ENCODE measurements at regions of chr16 and their contacts with region 1.

Region 1: GRCh38 chr16:9447195-9447551 is 355.7 kb downstream of the HAPSTR1 start:
- DNase-seq: peak; percentile 70 to 86 (median 78)
- ATAC-seq: peak; percentile 91 to 95 (median 93)
- H3K4me3 ChIP-seq: no peak overlapping the region
- H3K27ac ChIP-seq: peak overlapping the region; percentile 41 to 83 (median 65)
- H3K4me1 ChIP-seq: peaks cover 0 to 10% (median 0%) of the 10 kb centered on the region in 12 donors
- H3K27me3 ChIP-seq: no peaks in the 10 kb centered on the region
- CTCF ChIP-seq: no peak
- POLR2A ChIP-seq: no peak

Region 2: GRCh38 chr16:9365376-9365728 is 81.8 kb before region 1 on chr16:
- intact Hi-C with region 1: loop called in 4 of 10 experiments (anchors 1 to 5 kb)
- DNase-seq: peak in 4 of 5 donors; percentile 71 to 89 (median 81)
- ATAC-seq: peak; percentile 90 to 94 (median 93)
- H3K4me3 ChIP-seq: no peak overlapping the region
- H3K27ac ChIP-seq: peak overlapping the region in 10 of 12 donors; percentile 51 to 82 (median 66)
- H3K4me1 ChIP-seq: peaks cover 0 to 26% (median 5%) of the 10 kb centered on the region in 12 donors
- H3K27me3 ChIP-seq: no peaks in the 10 kb centered on the region
- CTCF ChIP-seq: no peak
- POLR2A ChIP-seq: no peak

Region 3: GRCh38 chr16:9415548-9415947 is 31.6 kb before region 1 on chr16:
- intact Hi-C with region 1: no loop called
- DNase-seq: no peak
- ATAC-seq: no peak
- H3K4me3 ChIP-seq: no peak overlapping the region
- H3K27ac ChIP-seq: no peak overlapping the region
- H3K4me1 ChIP-seq: no peaks in the 10 kb centered on the region
- H3K27me3 ChIP-seq: no peaks in the 10 kb centered on the region
- CTCF ChIP-seq: no peak
- POLR2A ChIP-seq: no peak

Region 4: GRCh38 chr16:9489835-9490467 is 42.8 kb after region 1 on chr16:
- intact Hi-C with region 1: loop called in 2 of 10 experiments (anchors 5 kb)
- DNase-seq: peak; percentile 13 to 88 (median 63)
- ATAC-seq: peak; percentile 92 to 97 (median 94)
- H3K4me3 ChIP-seq: no peak overlapping the region
- H3K27ac ChIP-seq: peak overlapping the region in 8 of 12 donors; percentile 12 to 75 (median 45)
- H3K4me1 ChIP-seq: peaks cover 0 to 6% (median 0%) of the 10 kb centered on the region in 12 donors
- H3K27me3 ChIP-seq: peaks cover 0 to 6% (median 0%) of the 10 kb centered on the region in 9 donors
- CTCF ChIP-seq: no peak
- POLR2A ChIP-seq: no peak

Region 5: DNA sequence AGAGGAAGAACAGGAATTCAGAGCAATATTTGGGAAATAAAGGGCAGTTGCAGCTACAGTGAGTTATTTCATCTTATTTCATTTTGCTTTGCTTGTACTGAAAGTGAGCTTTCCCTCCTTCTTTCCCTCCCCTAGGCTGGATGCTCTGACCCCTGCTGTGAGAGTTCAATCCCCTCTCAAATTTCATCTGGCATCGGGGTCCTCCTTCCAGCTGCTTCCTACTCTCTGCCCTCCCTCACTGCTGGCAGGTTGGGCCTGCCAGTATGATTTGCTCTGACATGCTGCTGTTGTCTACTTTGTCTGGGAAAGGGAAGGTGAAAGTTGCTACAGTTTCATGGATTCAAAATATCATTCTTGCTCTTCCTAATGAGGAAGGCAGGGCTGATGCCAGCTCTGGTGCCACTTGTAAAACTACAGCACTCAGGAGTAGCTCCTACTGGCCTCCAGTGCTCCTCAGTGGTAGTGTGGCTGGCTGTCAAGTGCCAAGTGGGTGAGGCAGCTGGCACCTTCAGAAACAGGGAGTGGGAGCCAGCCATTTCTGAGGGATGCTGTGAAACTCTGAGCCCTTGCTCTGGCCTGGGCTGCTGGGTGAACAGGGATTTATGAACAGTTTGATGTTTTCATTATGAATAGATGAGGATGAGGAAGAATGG is 52.9 kb after region 1 on chr16:
- intact Hi-C with region 1: loop called in 1 of 10 experiments (anchors 5 kb)
- DNase-seq: peak in 2 of 5 donors; percentile 30 to 36
- ATAC-seq: no peak
- H3K4me3 ChIP-seq: no peak overlapping the region
- H3K27ac ChIP-seq: no peak overlapping the region
- H3K4me1 ChIP-seq: peaks cover 0 to 4% (median 0%) of the 10 kb centered on the region in 12 donors
- H3K27me3 ChIP-seq: peaks cover 0 to 4% (median 0%) of the 10 kb centered on the region in 9 donors
- CTCF ChIP-seq: peak in 1 of 12 donors; percentile 14
- POLR2A ChIP-seq: no peak

Region 6: DNA sequence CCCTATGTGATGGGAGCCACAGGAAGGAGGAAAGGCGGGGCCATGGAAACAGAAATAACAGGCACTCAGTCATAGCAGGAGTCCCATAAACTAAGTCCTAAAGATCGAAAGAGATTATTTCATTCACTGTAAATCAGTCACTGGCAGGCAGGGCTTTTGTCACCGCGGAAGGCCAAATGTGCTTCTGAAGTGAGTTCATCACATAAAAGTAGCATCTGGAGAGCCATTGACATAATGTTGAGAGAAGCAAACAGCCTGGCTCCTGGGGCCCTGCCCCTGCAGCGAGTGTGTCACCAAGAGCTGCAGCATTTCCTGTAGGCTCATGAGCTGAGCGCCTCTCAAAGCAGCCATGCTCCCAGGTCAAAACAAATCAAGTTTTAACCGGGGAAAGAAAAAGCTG is 120.5 kb after region 1 on chr16:
- intact Hi-C with region 1: no loop called
- DNase-seq: no peak
- ATAC-seq: no peak
- H3K4me3 ChIP-seq: no peak overlapping the region
- H3K27ac ChIP-seq: no peak overlapping the region
- H3K4me1 ChIP-seq: no peaks in the 10 kb centered on the region
- H3K27me3 ChIP-seq: no peaks in the 10 kb centered on the region
- CTCF ChIP-seq: no peak
- POLR2A ChIP-seq: no peak